Sigmoid colon (tissue), 7 donors: ENCODE measurements at regions of chr7 and their contacts with region 1.

Region 1: DNA sequence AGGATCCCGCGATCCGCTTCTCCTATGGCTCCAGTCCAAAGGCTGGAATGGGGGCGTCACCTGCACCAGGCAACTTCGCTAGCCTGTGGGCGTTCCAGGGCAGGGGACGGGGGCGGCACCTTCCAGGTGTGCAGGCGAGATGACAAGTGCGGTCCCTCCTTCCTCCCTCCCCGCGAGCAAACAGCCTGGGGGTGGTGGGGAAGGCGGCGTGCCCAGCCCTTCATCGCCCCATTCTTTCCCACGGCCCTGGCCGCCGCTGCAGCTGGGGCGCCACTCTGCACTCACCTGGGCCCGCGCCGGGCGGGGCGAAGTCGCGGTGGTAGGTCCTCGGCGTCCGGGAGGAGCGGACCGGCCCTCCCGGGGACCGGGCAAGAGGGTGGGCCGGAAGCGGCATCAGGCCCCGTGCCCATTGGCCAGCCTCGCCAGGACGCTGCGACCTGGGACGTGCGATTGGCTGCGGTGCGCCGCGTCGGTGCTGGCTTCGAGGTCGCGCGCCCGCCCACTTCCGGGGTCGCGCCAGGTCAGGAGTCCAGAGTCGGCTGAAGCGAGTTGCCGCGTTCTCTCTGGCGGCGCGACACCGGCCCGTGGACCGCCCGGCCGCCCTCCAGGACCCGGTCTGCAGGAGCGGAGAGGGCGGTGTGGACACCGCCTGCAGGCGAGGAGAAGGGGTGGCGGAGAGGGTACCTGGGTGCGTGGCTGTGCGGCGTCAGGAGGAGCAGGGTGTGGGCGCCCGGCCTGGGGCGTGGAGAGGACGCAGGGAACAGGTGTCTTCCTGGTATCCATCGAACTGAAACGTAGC is at the start of gene TECPR1:
- DNase-seq: peak; percentile 97
- H3K4me3 ChIP-seq: peak within 1 kb of the TSS; percentile 58 to 88 (median 76)
- H3K27ac ChIP-seq: peak within 1 kb of the TSS; percentile 78 to 88 (median 84)
- H3K4me1 ChIP-seq: peaks cover 0 to 31% (median 23%) of the 10 kb centered on the region in 4 donors
- H3K27me3 ChIP-seq: no peaks in the 10 kb centered on the region
- CTCF ChIP-seq: no peak
- EP300 ChIP-seq: no peak
- POLR2A ChIP-seq: peak in 1 of 2 donors; percentile 20
- total RNA-seq, gene TECPR1: 7.7 to 38.2 (median 18.2) TPM

Region 2: GRCh38 chr7:98106647-98107445 is 145.2 kb before region 1 on chr7 and contains the start of gene LMTK2:
- intact Hi-C with region 1: loop called (anchors 5 kb)
- DNase-seq: peak; percentile 97
- H3K4me3 ChIP-seq: peak within 1 kb of the TSS; percentile 87 to 100 (median 98)
- H3K27ac ChIP-seq: peak within 1 kb of the TSS; percentile 84 to 90 (median 87)
- H3K4me1 ChIP-seq: peaks cover 0 to 17% (median 6%) of the 10 kb centered on the region in 4 donors
- H3K27me3 ChIP-seq: no peaks in the 10 kb centered on the region
- CTCF ChIP-seq: peak; percentile 73 to 92 (median 83)
- EP300 ChIP-seq: no peak
- POLR2A ChIP-seq: peak; percentile 88 to 94
- total RNA-seq, gene LMTK2: 16.8 to 19.9 (median 18.0) TPM

Region 3: GRCh38 chr7:98280791-98281756 is 29.0 kb after region 1 on chr7 and contains the start of gene BRI3:
- intact Hi-C with region 1: loop called (anchors 1 kb)
- DNase-seq: peak; percentile 95
- H3K4me3 ChIP-seq: peak within 1 kb of the TSS; percentile 90 to 100 (median 100)
- H3K27ac ChIP-seq: peak within 1 kb of the TSS; percentile 95 to 97 (median 96)
- H3K4me1 ChIP-seq: peaks cover 0 to 59% (median 53%) of the 10 kb centered on the region in 4 donors
- H3K27me3 ChIP-seq: no peaks in the 10 kb centered on the region
- CTCF ChIP-seq: no peak
- EP300 ChIP-seq: no peak
- POLR2A ChIP-seq: peak; percentile 86 to 91
- total RNA-seq, gene BRI3: 44.9 to 61.8 (median 48.4) TPM

Region 4: GRCh38 chr7:98584830-98585229 is 332.8 kb after region 1 on chr7:
- intact Hi-C with region 1: no loop called
- DNase-seq: no peak
- H3K4me3 ChIP-seq: no peak overlapping the region
- H3K27ac ChIP-seq: no peak overlapping the region
- H3K4me1 ChIP-seq: no peaks in the 10 kb centered on the region
- H3K27me3 ChIP-seq: no peaks in the 10 kb centered on the region
- CTCF ChIP-seq: no peak
- EP300 ChIP-seq: no peak
- POLR2A ChIP-seq: no peak

Region 5: DNA sequence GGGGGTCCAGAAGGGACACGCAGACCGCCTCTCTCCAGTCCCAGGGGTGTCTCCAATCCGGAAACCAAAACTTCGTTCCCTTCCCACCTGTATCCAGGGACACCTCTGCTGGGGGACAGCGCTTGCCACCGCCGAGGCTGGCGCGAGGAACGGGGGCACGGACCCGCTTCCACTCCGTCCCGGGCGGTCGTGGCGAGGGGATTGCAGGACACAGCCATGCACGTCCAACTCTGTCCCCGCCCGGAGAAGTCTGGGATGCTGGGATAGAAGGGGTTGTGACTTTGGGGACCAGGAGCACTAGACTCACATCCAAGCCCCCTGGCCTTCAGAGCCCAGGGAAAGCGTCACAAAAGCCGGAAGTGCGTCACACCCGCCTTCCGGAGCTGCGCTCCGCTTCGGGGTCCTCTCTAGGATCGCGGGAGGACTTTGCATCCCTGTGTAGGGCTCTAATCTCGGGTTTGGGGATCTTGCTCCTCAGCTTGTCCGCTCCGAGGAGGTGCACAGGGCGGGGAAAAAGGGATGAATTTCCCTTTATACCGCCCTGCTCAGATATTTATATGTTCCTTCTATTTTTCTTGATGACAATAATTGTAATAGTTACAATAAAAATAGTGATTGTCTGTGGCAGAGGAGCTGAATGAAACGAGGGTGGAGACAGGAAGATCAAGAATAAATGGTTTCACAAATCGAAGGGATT is 1299.9 kb after region 1 on chr7 and contains the start of gene FAM200A:
- intact Hi-C with region 1: loop called (anchors 10 kb)
- DNase-seq: peak; percentile 93
- H3K4me3 ChIP-seq: peak within 1 kb of the TSS; percentile 77 to 96 (median 87)
- H3K27ac ChIP-seq: peak within 1 kb of the TSS; percentile 81 to 88 (median 84)
- H3K4me1 ChIP-seq: peaks cover 0 to 26% (median 17%) of the 10 kb centered on the region in 4 donors
- H3K27me3 ChIP-seq: no peaks in the 10 kb centered on the region
- CTCF ChIP-seq: no peak
- EP300 ChIP-seq: peak in 1 of 4 donors; percentile 52
- POLR2A ChIP-seq: peak; percentile 82 to 94
- total RNA-seq, gene FAM200A: 2.3 to 6.4 (median 4.6) TPM